ENCODE measurements at regions of chr18 and their contacts with region 1.

Region 1: GRCh38 chr18:3297025-3297984 is 35.4 kb downstream of the MYL12B start:
- DNase-seq: peak; percentile 97
- H3K4me3 Mint-ChIP-seq: peak overlapping the region; percentile 93
- H3K27ac Mint-ChIP-seq: peak overlapping the region; percentile 81
- H3K4me1 Mint-ChIP-seq: peaks cover 11% of the 10 kb centered on the region
- H3K27me3 Mint-ChIP-seq: peaks cover 21% of the 10 kb centered on the region

Region 2: DNA sequence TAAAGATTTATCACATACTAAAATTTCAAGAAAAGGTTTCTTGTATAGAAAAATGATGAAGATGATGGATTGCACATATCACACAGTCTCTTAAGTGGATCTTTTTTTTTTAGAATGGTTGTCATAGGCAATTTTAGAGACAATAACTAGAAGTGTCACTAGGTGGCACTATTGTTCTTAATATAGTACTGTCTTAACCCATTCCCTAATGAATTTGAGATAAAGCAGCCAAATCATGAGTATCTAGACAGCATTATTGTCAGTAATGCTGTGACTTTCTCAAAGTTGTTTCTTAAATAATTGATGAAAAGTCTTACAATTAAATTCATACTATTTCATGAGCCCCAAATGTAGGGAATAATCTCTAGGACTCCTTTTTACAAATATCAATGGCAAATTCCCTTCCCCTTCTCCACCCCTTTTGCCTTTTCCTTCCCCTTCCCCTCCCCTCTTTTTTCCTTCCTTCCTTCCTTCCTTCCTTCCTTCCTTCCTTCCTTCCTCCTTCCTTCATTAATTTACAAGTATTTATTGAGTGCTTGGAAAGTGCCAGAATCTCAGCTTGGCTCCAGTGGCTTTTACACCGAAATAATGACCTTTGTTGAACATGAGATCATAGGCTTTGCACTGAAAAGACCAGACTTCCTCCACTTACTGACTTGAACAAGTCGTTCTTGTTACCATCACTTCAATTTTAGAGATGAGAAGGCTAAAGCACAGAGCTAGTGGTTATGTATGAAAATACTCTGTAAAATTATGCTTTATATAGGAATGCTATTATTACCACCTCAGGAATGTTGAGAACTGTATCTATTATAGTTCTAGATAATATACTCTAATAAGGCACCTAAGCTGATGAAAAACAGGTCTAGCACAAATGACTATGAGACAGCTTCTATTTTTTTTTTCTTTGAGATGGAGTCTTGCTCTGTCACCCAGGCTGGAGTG is 15.6 kb before region 1 on chr18:
- CTCF ChIA-PET with region 1: interaction called, 22 read pairs
- DNase-seq: no peak
- H3K4me3 Mint-ChIP-seq: no peak overlapping the region
- H3K27ac Mint-ChIP-seq: no peak overlapping the region
- H3K4me1 Mint-ChIP-seq: no peaks in the 10 kb centered on the region
- H3K27me3 Mint-ChIP-seq: peaks cover 6% of the 10 kb centered on the region

Region 3: DNA sequence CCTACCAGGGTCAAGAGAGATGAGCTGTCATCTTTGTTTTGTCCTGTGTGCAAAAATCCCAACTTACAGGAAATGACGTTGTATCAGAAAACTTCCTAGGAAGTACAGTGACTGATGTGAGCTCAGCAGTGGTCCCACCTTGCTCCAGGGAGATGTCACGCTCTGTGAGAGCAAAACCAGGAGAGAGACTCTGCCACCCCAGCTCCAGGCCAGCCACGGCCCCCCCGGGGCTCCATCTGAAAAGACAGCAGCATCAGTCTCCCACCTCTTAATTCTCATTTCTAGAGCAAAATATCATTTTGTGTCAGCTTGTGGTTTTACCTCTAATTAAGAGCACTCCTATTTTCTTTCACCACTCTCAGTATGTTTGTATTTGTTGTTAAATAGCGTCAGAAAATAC is 22.1 kb after region 1 on chr18:
- CTCF ChIA-PET with region 1: interaction called, 10 read pairs
- DNase-seq: no peak
- H3K4me3 Mint-ChIP-seq: no peak overlapping the region
- H3K27ac Mint-ChIP-seq: no peak overlapping the region
- H3K4me1 Mint-ChIP-seq: no peaks in the 10 kb centered on the region
- H3K27me3 Mint-ChIP-seq: peaks cover 3% of the 10 kb centered on the region